ENCODE measurements at regions of chr12 and their contacts with region 1.

Region 1: GRCh38 chr12:6965026-6965661 is 5.3 kb downstream of the PHB2 start:
- DNase-seq: peak; percentile 85 to 87 (median 85)
- H3K4me3 ChIP-seq: no peak overlapping the region
- H3K4me3 Mint-ChIP-seq: peak overlapping the region in 1 of 8 donors; percentile 39
- H3K27ac ChIP-seq: peak overlapping the region; percentile 53
- H3K27ac Mint-ChIP-seq: peak overlapping the region; percentile 88 to 94 (median 93)
- H3K4me1 ChIP-seq: peaks cover 68% of the 10 kb centered on the region
- H3K4me1 Mint-ChIP-seq: peaks cover 32 to 63% (median 47%) of the 10 kb centered on the region in 4 donors
- H3K27me3 ChIP-seq: no peaks in the 10 kb centered on the region
- H3K27me3 Mint-ChIP-seq: no peaks in the 10 kb centered on the region

Region 2: DNA sequence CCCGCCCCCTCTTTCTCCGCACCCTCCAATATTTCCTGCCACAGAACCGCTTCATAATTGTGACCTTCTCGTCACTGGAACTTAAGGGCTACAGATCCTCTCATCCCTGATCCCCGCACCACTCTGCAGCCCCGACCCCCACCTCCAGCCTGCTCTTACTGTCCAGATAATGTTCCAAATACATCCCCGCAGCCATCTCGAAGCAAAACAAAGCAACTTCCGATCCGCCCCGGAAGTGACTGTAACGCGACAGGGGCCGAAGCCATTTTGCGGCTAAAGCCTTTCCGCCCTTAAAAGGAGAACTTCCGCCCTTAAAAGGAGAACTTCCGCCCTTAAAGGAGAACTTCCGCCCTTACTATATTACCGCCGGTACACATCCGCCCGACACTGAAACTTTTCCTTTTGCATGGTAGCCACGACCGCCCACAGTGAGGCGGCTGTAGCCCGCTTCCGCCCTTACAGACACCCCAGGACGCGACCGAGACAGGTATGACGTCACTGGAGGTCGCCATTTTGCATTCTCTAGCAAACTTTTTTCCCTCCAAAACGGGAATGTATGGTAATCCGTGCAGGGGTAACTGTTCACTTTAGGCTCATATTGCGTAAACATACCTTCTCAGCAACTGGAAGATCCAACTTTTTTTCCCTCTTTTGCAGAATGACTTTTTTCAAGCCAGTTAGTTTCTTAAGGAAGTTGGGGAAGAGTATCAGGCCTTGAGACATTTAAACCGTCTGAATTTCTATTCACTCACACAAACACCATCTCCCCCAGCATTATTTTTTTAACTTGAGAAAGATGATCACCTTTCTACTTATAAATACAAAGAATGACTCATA is 302.0 kb before region 1 on chr12 and contains the start of gene ING4:
- CTCF ChIA-PET with region 1: no interaction called
- POLR2A ChIA-PET with region 1: no interaction called
- intact Hi-C with region 1: loop called (anchors 1 kb)
- DNase-seq: peak; percentile 95 to 99 (median 98)
- H3K4me3 ChIP-seq: peak within 1 kb of the TSS; percentile 97
- H3K4me3 Mint-ChIP-seq: peak within 1 kb of the TSS; percentile 91 to 97 (median 94)
- H3K27ac ChIP-seq: peak within 1 kb of the TSS; percentile 79
- H3K27ac Mint-ChIP-seq: peak within 1 kb of the TSS; percentile 88 to 98 (median 98)
- H3K4me1 ChIP-seq: peaks cover 21% of the 10 kb centered on the region
- H3K4me1 Mint-ChIP-seq: peaks cover 20 to 42% (median 30%) of the 10 kb centered on the region in 4 donors
- H3K27me3 ChIP-seq: no peaks in the 10 kb centered on the region
- H3K27me3 Mint-ChIP-seq: no peaks in the 10 kb centered on the region
- total RNA-seq, gene ING4: 82.3 to 83.5 TPM

Region 3: DNA sequence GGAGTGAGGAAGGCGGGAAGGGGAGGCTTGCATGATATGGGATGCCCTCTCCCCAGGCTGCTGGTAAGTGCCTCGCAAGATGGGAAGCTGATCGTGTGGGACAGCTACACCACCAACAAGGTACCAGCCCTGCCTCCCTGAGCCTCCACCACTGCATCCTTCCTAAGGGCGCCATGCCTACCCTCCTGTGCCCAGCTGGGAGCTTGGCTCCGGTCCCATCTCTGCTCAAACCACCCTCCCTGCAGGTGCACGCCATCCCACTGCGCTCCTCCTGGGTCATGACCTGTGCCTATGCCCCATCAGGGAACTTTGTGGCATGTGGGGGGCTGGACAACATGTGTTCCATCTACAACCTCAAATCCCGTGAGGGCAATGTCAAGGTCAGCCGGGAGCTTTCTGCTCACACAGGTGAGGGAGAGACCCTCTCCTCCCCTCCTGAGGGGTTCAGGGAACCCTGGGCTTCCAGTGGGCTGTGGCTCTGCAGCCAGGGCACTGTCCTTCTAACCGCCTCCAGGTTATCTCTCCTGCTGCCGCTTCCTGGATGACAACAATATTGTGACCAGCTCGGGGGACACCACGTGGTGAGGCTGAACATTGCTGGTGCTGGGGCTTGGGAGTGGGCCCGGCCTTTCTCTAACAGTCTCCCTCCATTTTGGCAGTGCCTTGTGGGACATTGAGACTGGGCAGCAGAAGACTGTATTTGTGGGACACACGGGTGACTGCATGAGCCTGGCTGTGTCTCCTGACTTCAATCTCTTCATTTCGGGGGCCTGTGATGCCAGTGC is 121.8 kb before region 1 on chr12:
- CTCF ChIA-PET with region 1: no interaction called
- POLR2A ChIA-PET with region 1: no interaction called
- intact Hi-C with region 1: no loop called
- DNase-seq: peak in 1 of 5 donors; percentile 3
- H3K4me3 ChIP-seq: no peak overlapping the region
- H3K4me3 Mint-ChIP-seq: no peak overlapping the region
- H3K27ac ChIP-seq: no peak overlapping the region
- H3K27ac Mint-ChIP-seq: no peak overlapping the region
- H3K4me1 ChIP-seq: no peaks in the 10 kb centered on the region
- H3K4me1 Mint-ChIP-seq: no peaks in the 10 kb centered on the region
- H3K27me3 ChIP-seq: no peaks in the 10 kb centered on the region
- H3K27me3 Mint-ChIP-seq: no peaks in the 10 kb centered on the region

Region 4: DNA sequence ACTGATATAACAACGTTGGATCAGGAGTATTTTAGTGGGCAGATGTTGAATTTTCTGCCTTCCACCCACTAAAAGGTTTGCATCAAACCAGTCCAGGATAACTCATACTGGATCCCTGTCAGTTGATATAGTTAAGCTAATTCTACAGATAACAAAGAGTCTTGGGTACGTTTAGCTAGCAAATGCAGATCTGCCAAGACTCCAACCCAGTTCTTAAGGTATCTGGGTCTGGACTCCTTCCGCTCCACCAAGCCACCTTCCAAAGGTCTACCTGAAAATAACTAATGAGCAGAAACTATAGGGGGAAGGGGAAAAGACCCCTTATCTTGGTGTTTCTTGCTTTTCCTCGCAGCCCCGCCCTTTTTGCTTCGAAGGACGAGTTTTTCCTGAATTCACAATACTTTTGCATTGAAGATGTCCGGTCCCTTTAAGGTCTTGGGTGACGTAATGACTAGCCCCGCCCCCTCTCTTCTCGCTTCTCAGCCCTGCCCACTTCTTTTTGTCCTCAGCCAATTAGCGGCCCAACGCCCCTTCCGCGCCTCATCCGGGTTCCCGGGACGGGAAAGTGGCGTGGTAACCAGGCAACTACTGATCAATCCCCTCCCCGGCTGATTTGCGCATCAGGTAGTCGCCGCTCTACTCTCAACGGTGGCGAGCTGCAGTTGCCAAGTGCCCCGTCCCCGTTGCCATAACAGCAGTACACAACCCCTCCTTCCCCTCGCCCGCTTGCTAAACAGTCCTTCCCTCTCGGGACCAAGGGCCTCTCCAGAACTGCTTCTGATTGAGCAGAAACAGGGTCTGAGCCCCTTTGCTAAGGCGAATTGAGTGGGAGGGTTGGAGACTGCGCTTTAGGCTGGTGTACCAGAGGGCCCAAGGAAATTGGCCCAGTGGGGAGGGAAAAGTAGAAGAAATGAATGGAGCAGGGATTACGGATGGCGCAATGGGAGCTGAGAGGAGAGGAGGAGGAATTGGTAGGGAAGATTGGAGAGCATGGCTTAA is 60.6 kb before region 1 on chr12 and contains the start of gene LRRC23:
- CTCF ChIA-PET with region 1: interaction called, 3 read pairs
- POLR2A ChIA-PET with region 1: interaction called, 6 read pairs
- intact Hi-C with region 1: loop called (anchors 2 kb)
- DNase-seq: peak; percentile 97 to 99 (median 98)
- H3K4me3 ChIP-seq: peak within 1 kb of the TSS; percentile 74 to 95
- H3K4me3 Mint-ChIP-seq: no peak within 1 kb of the TSS
- H3K27ac ChIP-seq: peak within 1 kb of the TSS; percentile 86
- H3K27ac Mint-ChIP-seq: no peak within 1 kb of the TSS
- H3K4me1 ChIP-seq: peaks cover 19% of the 10 kb centered on the region
- H3K4me1 Mint-ChIP-seq: peaks cover 0 to 8% (median 6%) of the 10 kb centered on the region in 4 donors
- H3K27me3 ChIP-seq: no peaks in the 10 kb centered on the region
- H3K27me3 Mint-ChIP-seq: no peaks in the 10 kb centered on the region
- total RNA-seq, gene LRRC23: 8.3 to 9.1 TPM

Region 5: GRCh38 chr12:6921996-6922946 is 42.9 kb before region 1 on chr12:
- CTCF ChIA-PET with region 1: interaction called, 48 read pairs
- POLR2A ChIA-PET with region 1: interaction called, 86 read pairs
- intact Hi-C with region 1: loop called (anchors 1 kb)
- DNase-seq: no peak
- H3K4me3 ChIP-seq: no peak overlapping the region
- H3K4me3 Mint-ChIP-seq: no peak overlapping the region
- H3K27ac ChIP-seq: no peak overlapping the region
- H3K27ac Mint-ChIP-seq: peak overlapping the region in 4 of 7 donors; percentile 30 to 95 (median 49)
- H3K4me1 ChIP-seq: peaks cover 19% of the 10 kb centered on the region
- H3K4me1 Mint-ChIP-seq: peaks cover 13 to 33% (median 20%) of the 10 kb centered on the region in 4 donors
- H3K27me3 ChIP-seq: no peaks in the 10 kb centered on the region
- H3K27me3 Mint-ChIP-seq: no peaks in the 10 kb centered on the region

Region 6: DNA sequence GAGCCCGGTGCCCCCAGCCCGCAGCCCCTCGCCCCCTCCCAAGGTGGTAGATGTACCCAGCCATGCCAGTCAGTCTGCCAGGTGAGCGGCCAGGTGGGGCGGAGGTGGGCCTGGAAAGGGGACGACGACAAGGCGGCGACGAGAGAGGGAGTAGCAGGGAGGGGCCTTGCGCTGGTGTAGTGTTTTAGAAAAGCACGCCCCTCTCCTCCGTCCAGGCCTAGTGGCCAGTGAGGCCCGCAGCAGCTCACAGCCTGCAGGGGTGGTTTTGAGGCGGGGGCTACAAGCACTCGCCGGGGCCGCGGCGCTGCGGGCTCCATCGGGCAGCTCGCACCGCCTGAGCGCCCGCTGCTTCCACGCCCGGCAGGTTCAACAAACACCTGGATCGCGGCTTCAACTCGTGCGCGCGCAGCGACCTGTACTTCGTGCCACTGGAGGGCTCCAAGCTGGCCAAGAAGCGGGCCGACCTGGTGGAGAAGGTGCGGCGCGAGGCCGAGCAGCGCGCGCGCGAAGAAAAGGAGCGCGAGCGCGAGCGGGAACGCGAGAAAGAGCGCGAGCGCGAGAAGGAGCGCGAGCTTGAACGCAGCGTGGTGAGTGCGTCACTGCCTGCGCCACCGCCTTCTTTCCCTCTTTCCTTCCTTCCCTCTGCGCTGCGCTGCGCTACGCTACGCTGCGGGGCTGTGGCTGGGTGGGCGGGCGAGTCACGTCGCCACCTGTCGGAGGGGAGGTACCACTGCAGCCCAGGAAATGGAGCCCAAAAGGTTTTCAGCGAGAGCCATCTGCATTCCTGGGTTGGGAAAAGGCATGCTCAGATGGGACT is 27.5 kb before region 1 on chr12:
- CTCF ChIA-PET with region 1: interaction called, 774 read pairs
- POLR2A ChIA-PET with region 1: interaction called, 1,807 read pairs
- intact Hi-C with region 1: loop called (anchors 1 kb)
- DNase-seq: peak; percentile 92 to 96 (median 95)
- H3K4me3 ChIP-seq: peak overlapping the region; percentile 47 to 82
- H3K4me3 Mint-ChIP-seq: peak overlapping the region; percentile 80 to 88 (median 84)
- H3K27ac ChIP-seq: peak overlapping the region; percentile 95
- H3K27ac Mint-ChIP-seq: peak overlapping the region; percentile 93 to 99 (median 94)
- H3K4me1 ChIP-seq: peaks cover 29% of the 10 kb centered on the region
- H3K4me1 Mint-ChIP-seq: peaks cover 20 to 48% (median 35%) of the 10 kb centered on the region in 4 donors
- H3K27me3 ChIP-seq: no peaks in the 10 kb centered on the region
- H3K27me3 Mint-ChIP-seq: no peaks in the 10 kb centered on the region

Region 7: GRCh38 chr12:6953442-6954315 is 11.5 kb before region 1 on chr12:
- CTCF ChIA-PET with region 1: interaction called, 774 read pairs
- POLR2A ChIA-PET with region 1: interaction called, 1,807 read pairs
- intact Hi-C with region 1: loop called (anchors 1 kb)
- DNase-seq: peak; percentile 72 to 95 (median 78)
- H3K4me3 ChIP-seq: peak overlapping the region; percentile 81 to 82
- H3K4me3 Mint-ChIP-seq: peak overlapping the region; percentile 94 to 100 (median 98)
- H3K27ac ChIP-seq: peak overlapping the region; percentile 96
- H3K27ac Mint-ChIP-seq: peak overlapping the region; percentile 89 to 98 (median 96)
- H3K4me1 ChIP-seq: peaks cover 81% of the 10 kb centered on the region
- H3K4me1 Mint-ChIP-seq: peaks cover 62 to 97% (median 66%) of the 10 kb centered on the region in 4 donors
- H3K27me3 ChIP-seq: no peaks in the 10 kb centered on the region
- H3K27me3 Mint-ChIP-seq: peaks cover 0 to 3% of the 10 kb centered on the region in 2 donors

Region 8: GRCh38 chr12:6981152-6982052 is 16.3 kb after region 1 on chr12:
- CTCF ChIA-PET with region 1: no interaction called
- POLR2A ChIA-PET with region 1: no interaction called
- intact Hi-C with region 1: no loop called
- DNase-seq: no peak
- H3K4me3 ChIP-seq: no peak overlapping the region
- H3K4me3 Mint-ChIP-seq: no peak overlapping the region
- H3K27ac ChIP-seq: no peak overlapping the region
- H3K27ac Mint-ChIP-seq: peak overlapping the region in 4 of 7 donors; percentile 16 to 82 (median 34)
- H3K4me1 ChIP-seq: no peaks in the 10 kb centered on the region
- H3K4me1 Mint-ChIP-seq: peaks cover 0 to 1% (median 0%) of the 10 kb centered on the region in 4 donors
- H3K27me3 ChIP-seq: no peaks in the 10 kb centered on the region
- H3K27me3 Mint-ChIP-seq: no peaks in the 10 kb centered on the region

Region 9: GRCh38 chr12:7089196-7089871 is 124.2 kb after region 1 on chr12:
- CTCF ChIA-PET with region 1: no interaction called
- POLR2A ChIA-PET with region 1: no interaction called
- intact Hi-C with region 1: no loop called
- DNase-seq: no peak
- H3K4me3 ChIP-seq: no peak overlapping the region
- H3K4me3 Mint-ChIP-seq: no peak overlapping the region
- H3K27ac ChIP-seq: no peak overlapping the region
- H3K27ac Mint-ChIP-seq: peak overlapping the region in 1 of 7 donors; percentile 38
- H3K4me1 ChIP-seq: peaks cover 15% of the 10 kb centered on the region
- H3K4me1 Mint-ChIP-seq: peaks cover 6 to 12% (median 8%) of the 10 kb centered on the region in 4 donors
- H3K27me3 ChIP-seq: no peaks in the 10 kb centered on the region
- H3K27me3 Mint-ChIP-seq: no peaks in the 10 kb centered on the region

Region 10: GRCh38 chr12:7188562-7189397 is 223.6 kb after region 1 on chr12:
- CTCF ChIA-PET with region 1: no interaction called
- POLR2A ChIA-PET with region 1: no interaction called
- intact Hi-C with region 1: loop called (anchors 1 kb)
- DNase-seq: peak; percentile 52 to 64 (median 57)
- H3K4me3 ChIP-seq: peak overlapping the region; percentile 82 to 99
- H3K4me3 Mint-ChIP-seq: peak overlapping the region; percentile 95 to 100 (median 98)
- H3K27ac ChIP-seq: peak overlapping the region; percentile 94
- H3K27ac Mint-ChIP-seq: peak overlapping the region; percentile 96 to 99 (median 99)
- H3K4me1 ChIP-seq: peaks cover 39% of the 10 kb centered on the region
- H3K4me1 Mint-ChIP-seq: peaks cover 23 to 55% (median 37%) of the 10 kb centered on the region in 4 donors
- H3K27me3 ChIP-seq: no peaks in the 10 kb centered on the region
- H3K27me3 Mint-ChIP-seq: no peaks in the 10 kb centered on the region